ENCODE measurements at regions of chr5 and their contacts with region 1.

Region 1: GRCh38 chr5:55711968-55712859 is at the start of gene SLC38A9:
- DNase-seq: peak; percentile 97
- H3K4me3 ChIP-seq: peak within 1 kb of the TSS; percentile 72 to 88 (median 80)
- H3K27ac ChIP-seq: peak within 1 kb of the TSS; percentile 67 to 85 (median 79)
- H3K4me1 ChIP-seq: peaks cover 7 to 28% (median 13%) of the 10 kb centered on the region in 4 donors
- H3K27me3 ChIP-seq: no peaks in the 10 kb centered on the region
- CTCF ChIP-seq: no peak
- EP300 ChIP-seq: no peak
- POLR2A ChIP-seq: peak; percentile 72
- total RNA-seq, gene SLC38A9: 15.0 to 48.6 (median 32.3) TPM

Region 2: DNA sequence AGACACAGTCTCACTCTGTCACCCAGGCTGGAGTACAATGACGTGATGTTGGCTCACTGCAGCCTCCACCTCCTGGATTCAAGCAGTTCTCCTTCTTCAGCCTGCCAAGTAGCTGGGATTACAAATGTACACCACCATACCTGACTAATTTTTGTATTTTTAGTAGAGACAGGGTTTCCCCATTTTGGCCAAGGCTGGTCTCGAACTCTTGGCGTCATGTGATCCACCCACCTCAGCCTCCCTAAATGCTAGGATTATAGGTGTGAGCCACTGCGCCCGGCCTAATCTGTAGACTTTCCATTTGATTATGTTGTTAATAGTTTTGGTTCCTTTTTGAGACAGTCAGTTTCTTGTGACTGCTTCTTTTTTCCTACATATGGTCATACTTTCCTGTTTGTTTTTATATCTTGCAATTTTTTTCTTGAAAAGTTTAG is 373.4 kb before region 1 on chr5:
- in situ Hi-C with region 1: loop called in 1 of 4 experiments (anchors 10 kb)
- intact Hi-C with region 1: no loop called
- DNase-seq: no peak
- H3K4me3 ChIP-seq: no peak overlapping the region
- H3K27ac ChIP-seq: no peak overlapping the region
- H3K4me1 ChIP-seq: peaks cover 0 to 5% (median under 1%) of the 10 kb centered on the region in 4 donors
- H3K27me3 ChIP-seq: no peaks in the 10 kb centered on the region
- CTCF ChIP-seq: no peak
- EP300 ChIP-seq: no peak
- POLR2A ChIP-seq: no peak

Region 3: GRCh38 chr5:55657443-55657842 is 54.8 kb before region 1 on chr5:
- in situ Hi-C with region 1: no loop called
- intact Hi-C with region 1: no loop called
- DNase-seq: no peak
- H3K4me3 ChIP-seq: no peak overlapping the region
- H3K27ac ChIP-seq: peak overlapping the region; percentile 4 to 52 (median 34)
- H3K4me1 ChIP-seq: peaks cover 0 to 14% (median 4%) of the 10 kb centered on the region in 4 donors
- H3K27me3 ChIP-seq: no peaks in the 10 kb centered on the region
- CTCF ChIP-seq: no peak
- EP300 ChIP-seq: no peak
- POLR2A ChIP-seq: no peak

Region 4: DNA sequence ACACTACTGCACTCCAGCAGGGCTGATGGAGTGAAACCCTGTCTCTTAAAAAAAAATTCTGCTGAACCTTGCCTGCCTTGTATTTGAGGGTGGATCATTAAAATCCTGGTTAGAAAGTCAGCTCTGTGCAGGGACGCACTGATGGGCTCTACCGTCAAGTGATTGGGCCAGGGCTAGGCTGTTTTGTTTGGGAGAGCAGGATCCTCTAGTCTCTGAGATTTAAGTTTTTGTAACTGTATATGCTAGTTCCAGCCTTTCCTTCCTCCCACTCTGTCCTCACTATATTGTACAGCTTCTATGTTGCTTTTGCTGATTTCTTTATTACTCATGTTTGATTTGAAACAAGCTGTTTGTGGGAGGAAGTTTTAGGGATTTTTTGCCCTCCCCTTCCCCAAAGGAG is 37.2 kb after region 1 on chr5:
- in situ Hi-C with region 1: no loop called
- intact Hi-C with region 1: no loop called
- DNase-seq: no peak
- H3K4me3 ChIP-seq: no peak overlapping the region
- H3K27ac ChIP-seq: no peak overlapping the region
- H3K4me1 ChIP-seq: no peaks in the 10 kb centered on the region
- H3K27me3 ChIP-seq: no peaks in the 10 kb centered on the region
- CTCF ChIP-seq: no peak
- EP300 ChIP-seq: no peak
- POLR2A ChIP-seq: no peak